ENCODE measurements at regions of chr3 and their contacts with region 1.

Region 1: DNA sequence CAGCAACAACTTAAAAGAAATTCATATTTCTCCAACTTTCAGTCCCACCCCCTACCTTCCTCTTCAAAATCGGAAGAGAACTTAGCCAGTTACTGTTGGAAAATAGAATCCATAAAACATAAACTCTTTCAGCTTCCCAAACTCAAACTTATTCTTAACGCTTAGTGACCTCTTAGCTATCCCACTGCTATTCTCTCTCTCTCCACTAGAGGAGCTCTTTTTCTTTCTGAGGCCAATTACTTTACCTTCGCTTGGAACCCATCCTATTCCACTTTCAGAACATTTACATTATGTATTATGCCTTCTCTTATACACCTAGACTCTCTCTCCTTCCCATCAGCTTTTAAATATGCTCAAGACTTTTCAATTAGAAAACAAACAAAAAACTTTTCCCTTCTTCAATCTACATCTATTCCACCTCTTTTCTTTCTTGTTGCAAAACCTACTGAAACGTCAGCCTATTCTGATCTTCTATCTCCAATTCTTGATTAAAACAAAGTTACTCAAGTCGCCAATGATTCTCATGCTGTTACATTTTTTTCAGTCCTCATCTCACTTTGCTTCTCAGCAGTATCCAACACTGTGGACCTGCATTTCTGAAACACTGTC is 13.4 kb upstream of the GHSR start:
- DNase-seq: peak in 4 of 9 donors; percentile 23 to 37 (median 30)
- ATAC-seq: peak; percentile 77
- H3K4me3 ChIP-seq: no peak overlapping the region
- H3K4me3 Mint-ChIP-seq: no peak overlapping the region
- H3K27ac ChIP-seq: no peak overlapping the region
- H3K27ac Mint-ChIP-seq: no peak overlapping the region
- H3K4me1 ChIP-seq: no peaks in the 10 kb centered on the region
- H3K4me1 Mint-ChIP-seq: no peaks in the 10 kb centered on the region
- H3K27me3 ChIP-seq: no peaks in the 10 kb centered on the region
- H3K27me3 Mint-ChIP-seq: peaks cover 0 to 7% (median under 1%) of the 10 kb centered on the region in 5 donors

Region 2: DNA sequence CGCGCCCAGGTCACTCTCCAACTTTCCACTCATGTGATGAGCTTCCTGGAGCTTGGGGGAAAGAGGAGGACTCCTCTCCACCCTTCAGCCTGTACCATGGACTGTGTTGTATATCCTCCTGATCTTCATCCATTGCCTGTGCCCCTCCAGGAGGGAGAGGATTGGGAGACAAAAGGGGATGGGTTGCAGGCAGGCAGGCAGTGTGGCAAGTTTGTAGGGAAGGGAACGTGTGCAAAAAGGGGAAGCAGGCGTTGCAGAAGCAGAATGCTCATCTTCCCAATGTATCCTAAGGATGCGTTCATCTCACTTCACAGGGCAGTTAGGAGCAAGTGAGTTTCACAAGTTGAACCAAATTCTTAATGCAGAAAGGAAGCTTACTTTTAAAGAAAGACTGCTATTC is 14.7 kb after region 1 on chr3:
- CTCF ChIA-PET with region 1: interaction called, 5 read pairs
- POLR2A ChIA-PET with region 1: no interaction called
- intact Hi-C with region 1: loop called (anchors 1 to 2 kb)
- DNase-seq: no peak
- ATAC-seq: no peak
- H3K4me3 ChIP-seq: peak overlapping the region; percentile 61
- H3K4me3 Mint-ChIP-seq: peak overlapping the region; percentile 27 to 95 (median 90)
- H3K27ac ChIP-seq: no peak overlapping the region
- H3K27ac Mint-ChIP-seq: no peak overlapping the region
- H3K4me1 ChIP-seq: no peaks in the 10 kb centered on the region
- H3K4me1 Mint-ChIP-seq: peaks cover 5 to 18% (median 12%) of the 10 kb centered on the region in 7 donors
- H3K27me3 ChIP-seq: no peaks in the 10 kb centered on the region
- H3K27me3 Mint-ChIP-seq: peaks cover 0 to 10% (median 4%) of the 10 kb centered on the region in 5 donors

Region 3: GRCh38 chr3:172622916-172623700 is 161.5 kb after region 1 on chr3:
- CTCF ChIA-PET with region 1: interaction called, 4 read pairs
- POLR2A ChIA-PET with region 1: no interaction called
- intact Hi-C with region 1: loop called in 1 of 2 experiments (anchors 1 kb)
- DNase-seq: peak in 7 of 9 donors; percentile 16 to 48 (median 34)
- ATAC-seq: peak; percentile 75
- H3K4me3 ChIP-seq: no peak overlapping the region
- H3K4me3 Mint-ChIP-seq: peak overlapping the region in 8 of 10 donors; percentile 37 to 71 (median 50)
- H3K27ac ChIP-seq: no peak overlapping the region
- H3K27ac Mint-ChIP-seq: no peak overlapping the region
- H3K4me1 ChIP-seq: no peaks in the 10 kb centered on the region
- H3K4me1 Mint-ChIP-seq: peaks cover 0 to 12% (median 6%) of the 10 kb centered on the region in 7 donors
- H3K27me3 ChIP-seq: no peaks in the 10 kb centered on the region
- H3K27me3 Mint-ChIP-seq: no peaks in the 10 kb centered on the region